SK-N-SH (cell line): ENCODE measurements at regions of chr2 and their contacts with region 1.

Region 1: GRCh38 chr2:134245340-134245984 is 8.4 kb upstream of the MGAT5 start:
- DNase-seq: peak; percentile 43
- H3K4me3 ChIP-seq: no peak overlapping the region; a peak in 1 of 4 replicates
- H3K27ac ChIP-seq: peak overlapping the region in 1 of 2 experiments; percentile 79; a peak in 2 of 4 replicates
- H3K4me1 ChIP-seq: peaks cover 6 to 33% of the 10 kb centered on the region in 2 experiments; a peak in 3 of 4 replicates
- H3K27me3 ChIP-seq: no peaks in the 10 kb centered on the region
- CTCF ChIP-seq: peak; percentile 90
- EP300 ChIP-seq: no peak
- RAD21 ChIP-seq: peak; percentile 78

Region 2: DNA sequence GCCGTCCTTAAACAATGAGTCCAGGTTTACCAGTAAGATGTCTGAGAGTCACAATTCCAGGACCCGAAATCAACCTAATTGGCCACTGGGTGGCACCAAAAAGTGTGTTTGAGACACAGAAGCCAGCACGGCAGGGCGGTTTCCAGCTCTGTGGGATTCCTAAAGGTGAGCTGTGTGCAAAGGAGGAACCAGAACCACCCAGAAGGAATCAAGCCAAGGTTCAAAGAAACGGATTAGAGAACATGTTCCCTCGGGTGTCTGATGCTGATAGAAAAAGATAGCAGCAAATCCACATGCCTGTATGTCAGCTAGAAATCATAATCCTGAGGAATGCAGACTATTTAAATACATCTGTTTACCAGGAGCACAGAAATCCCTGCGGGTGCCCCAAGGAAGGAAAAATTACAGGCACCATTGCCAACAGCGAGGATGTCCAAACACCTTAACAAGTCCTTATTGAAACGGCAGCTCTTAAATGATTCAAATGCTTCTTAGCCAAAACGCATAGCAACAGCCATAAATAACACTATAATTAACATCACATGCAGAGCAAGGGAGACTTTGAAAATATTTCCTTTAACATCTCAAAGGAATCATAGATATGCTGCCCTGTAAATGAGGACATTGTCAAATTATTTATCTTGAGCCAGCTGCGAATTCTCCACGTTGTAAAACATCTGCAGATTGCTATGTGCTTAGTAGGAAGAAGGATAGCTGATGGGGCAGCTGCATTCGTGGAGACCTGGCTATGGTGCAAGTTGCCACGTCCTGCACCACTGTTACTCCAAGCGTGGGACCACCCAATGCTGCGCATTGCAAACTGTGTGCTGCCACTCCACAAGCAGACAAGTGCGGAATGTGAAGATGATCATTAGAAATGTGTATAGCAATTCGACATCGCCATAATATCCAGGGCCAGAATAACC is 358.5 kb before region 1 on chr2:
- CTCF ChIA-PET with region 1: interaction called, 37 read pairs
- POLR2A ChIA-PET with region 1: no interaction called
- DNase-seq: peak; percentile 65
- H3K4me3 ChIP-seq: no peak overlapping the region; a peak in 1 of 4 replicates
- H3K27ac ChIP-seq: no peak overlapping the region
- H3K4me1 ChIP-seq: peaks cover 0 to 9% of the 10 kb centered on the region in 2 experiments; a peak in 1 of 4 replicates
- H3K27me3 ChIP-seq: no peaks in the 10 kb centered on the region; the same call in 1 of the 2 replicates
- CTCF ChIP-seq: peak; percentile 69
- EP300 ChIP-seq: no peak
- RAD21 ChIP-seq: peak; percentile 86

Region 3: GRCh38 chr2:134232868-134233727 is 12.4 kb before region 1 on chr2:
- CTCF ChIA-PET with region 1: interaction called, 19 read pairs
- POLR2A ChIA-PET with region 1: no interaction called
- DNase-seq: no peak
- H3K4me3 ChIP-seq: no peak overlapping the region
- H3K27ac ChIP-seq: peak overlapping the region; percentile 14 to 87; a peak in 3 of 4 replicates
- H3K4me1 ChIP-seq: peaks cover 18 to 24% of the 10 kb centered on the region in 2 experiments; a peak in 3 of 4 replicates
- H3K27me3 ChIP-seq: no peaks in the 10 kb centered on the region
- CTCF ChIP-seq: no peak
- EP300 ChIP-seq: no peak
- RAD21 ChIP-seq: no peak

Region 4: GRCh38 chr2:134282629-134283400 is 37.4 kb after region 1 on chr2:
- CTCF ChIA-PET with region 1: interaction called, 11 read pairs
- POLR2A ChIA-PET with region 1: no interaction called
- DNase-seq: no peak
- H3K4me3 ChIP-seq: no peak overlapping the region
- H3K27ac ChIP-seq: peak overlapping the region in 1 of 2 experiments; percentile 50; a peak in 1 of 4 replicates
- H3K4me1 ChIP-seq: peaks cover 0 to 30% of the 10 kb centered on the region in 2 experiments; a peak in 2 of 4 replicates
- H3K27me3 ChIP-seq: no peaks in the 10 kb centered on the region
- CTCF ChIP-seq: no peak
- EP300 ChIP-seq: no peak
- RAD21 ChIP-seq: no peak

Region 5: GRCh38 chr2:134375935-134376334 is 130.5 kb after region 1 on chr2:
- CTCF ChIA-PET with region 1: interaction called, 18 read pairs
- POLR2A ChIA-PET with region 1: no interaction called
- DNase-seq: peak; percentile 23
- H3K4me3 ChIP-seq: no peak overlapping the region
- H3K27ac ChIP-seq: peak overlapping the region in 1 of 2 experiments; percentile 34; a peak in 1 of 4 replicates
- H3K4me1 ChIP-seq: peaks cover 0 to 25% of the 10 kb centered on the region in 2 experiments; a peak in 1 of 4 replicates
- H3K27me3 ChIP-seq: no peaks in the 10 kb centered on the region
- CTCF ChIP-seq: peak; percentile 34; the same call in 1 of the 2 replicates
- EP300 ChIP-seq: no peak
- RAD21 ChIP-seq: peak; percentile 75

Region 6: DNA sequence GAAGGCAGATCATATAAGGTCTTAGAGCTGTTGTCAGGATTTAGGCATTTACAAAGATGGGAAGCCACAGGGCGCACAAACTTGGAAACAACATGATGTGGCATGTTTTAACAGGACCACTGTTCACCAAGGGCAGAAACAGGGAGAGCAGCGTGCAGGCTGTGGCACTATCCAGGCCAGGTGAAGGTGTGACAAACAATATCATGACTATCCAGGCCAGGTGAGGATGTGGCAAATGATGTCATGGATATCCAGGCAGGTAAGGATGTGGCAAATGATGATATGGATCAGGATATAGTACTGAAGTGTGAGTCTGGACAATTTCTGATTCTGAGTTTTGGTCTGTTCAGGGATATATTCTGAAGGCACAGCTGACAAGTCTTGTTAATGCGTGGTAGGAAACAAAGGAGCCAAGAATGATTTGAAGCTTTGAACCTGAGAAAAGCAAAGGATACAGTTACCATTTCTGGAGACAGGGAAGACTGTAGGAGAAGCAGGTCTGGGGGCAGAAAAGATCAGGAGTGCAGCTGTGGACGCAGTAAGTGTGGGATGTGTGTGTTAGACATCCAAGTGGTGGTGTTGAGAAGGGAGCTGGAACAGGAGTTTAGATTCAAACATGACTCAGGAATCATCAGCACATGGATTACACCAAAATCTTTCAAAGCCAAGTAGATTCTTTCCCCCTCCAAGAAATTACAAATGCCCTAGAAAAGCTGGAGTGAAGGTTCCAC is 267.4 kb after region 1 on chr2:
- CTCF ChIA-PET with region 1: no interaction called
- POLR2A ChIA-PET with region 1: no interaction called
- DNase-seq: no peak
- H3K4me3 ChIP-seq: no peak overlapping the region
- H3K27ac ChIP-seq: no peak overlapping the region
- H3K4me1 ChIP-seq: peaks cover 0 to 6% of the 10 kb centered on the region in 2 experiments; a peak in 1 of 4 replicates
- H3K27me3 ChIP-seq: no peaks in the 10 kb centered on the region
- CTCF ChIP-seq: no peak
- EP300 ChIP-seq: no peak
- RAD21 ChIP-seq: no peak